Cardiac septum (tissue), 1 donor: ENCODE measurements at regions of chr1 and their contacts with region 1.

Region 1: GRCh38 chr1:46102769-46103476 is 29.5 kb downstream of the PIK3R3 start:
- DNase-seq: no peak

Region 2: GRCh38 chr1:46070164-46070814 is 32.6 kb before region 1 on chr1:
- intact Hi-C with region 1: loop called (anchors 5 kb)
- DNase-seq: no peak

Region 3: GRCh38 chr1:46117810-46118494 is 15.0 kb after region 1 on chr1:
- intact Hi-C with region 1: no loop called
- DNase-seq: no peak

Region 4: DNA sequence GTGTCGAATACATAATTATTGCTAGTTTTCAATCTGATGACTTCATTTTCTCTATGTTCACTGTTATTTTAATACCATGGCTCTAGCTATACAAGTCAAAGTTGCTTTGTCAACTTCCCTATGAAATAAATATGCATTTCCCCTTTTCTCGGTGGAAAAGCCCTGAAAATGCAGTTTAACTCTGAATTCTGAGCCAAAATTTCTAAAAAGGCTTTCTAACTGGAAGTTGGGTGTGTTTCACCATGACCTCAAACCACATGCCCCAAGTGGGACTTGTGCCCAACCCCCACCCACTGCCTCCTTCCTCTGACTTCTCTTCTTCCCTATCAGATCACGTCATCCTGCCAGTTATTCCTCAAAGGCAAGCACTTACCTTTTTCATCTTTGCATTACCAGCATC is 492.2 kb after region 1 on chr1:
- intact Hi-C with region 1: no loop called
- DNase-seq: peak; percentile 89